ENCODE measurements at regions of chr3 and their contacts with region 1.

Region 1: GRCh38 chr3:98140531-98140930 is 6.7 kb upstream of the OR5H14 start:
- DNase-seq: no peak
- ATAC-seq: no peak
- H3K4me3 ChIP-seq: no peak overlapping the region
- H3K4me3 Mint-ChIP-seq: no peak overlapping the region
- H3K27ac ChIP-seq: no peak overlapping the region
- H3K27ac Mint-ChIP-seq: no peak overlapping the region
- H3K4me1 ChIP-seq: no peaks in the 10 kb centered on the region
- H3K4me1 Mint-ChIP-seq: no peaks in the 10 kb centered on the region
- H3K27me3 ChIP-seq: no peaks in the 10 kb centered on the region
- H3K27me3 Mint-ChIP-seq: peaks cover 4% of the 10 kb centered on the region
- CTCF ChIP-seq: no peak

Region 2: GRCh38 chr3:98151241-98151640 is 10.7 kb after region 1 on chr3:
- CTCF ChIA-PET with region 1: no interaction called
- POLR2A ChIA-PET with region 1: no interaction called
- intact Hi-C with region 1: no loop called
- DNase-seq: no peak
- ATAC-seq: no peak
- H3K4me3 ChIP-seq: no peak overlapping the region
- H3K4me3 Mint-ChIP-seq: no peak overlapping the region
- H3K27ac ChIP-seq: no peak overlapping the region
- H3K27ac Mint-ChIP-seq: no peak overlapping the region
- H3K4me1 ChIP-seq: no peaks in the 10 kb centered on the region
- H3K4me1 Mint-ChIP-seq: no peaks in the 10 kb centered on the region
- H3K27me3 ChIP-seq: no peaks in the 10 kb centered on the region
- H3K27me3 Mint-ChIP-seq: peaks cover 3% of the 10 kb centered on the region
- CTCF ChIP-seq: no peak

Region 3: GRCh38 chr3:98182196-98182595 is 41.7 kb after region 1 on chr3:
- CTCF ChIA-PET with region 1: no interaction called
- POLR2A ChIA-PET with region 1: no interaction called
- intact Hi-C with region 1: loop called (anchors 1 to 2 kb)
- DNase-seq: no peak
- ATAC-seq: no peak
- H3K4me3 ChIP-seq: no peak overlapping the region
- H3K4me3 Mint-ChIP-seq: no peak overlapping the region
- H3K27ac ChIP-seq: no peak overlapping the region
- H3K27ac Mint-ChIP-seq: no peak overlapping the region
- H3K4me1 ChIP-seq: no peaks in the 10 kb centered on the region
- H3K4me1 Mint-ChIP-seq: no peaks in the 10 kb centered on the region
- H3K27me3 ChIP-seq: no peaks in the 10 kb centered on the region
- H3K27me3 Mint-ChIP-seq: no peaks in the 10 kb centered on the region
- CTCF ChIP-seq: no peak

Region 4: DNA sequence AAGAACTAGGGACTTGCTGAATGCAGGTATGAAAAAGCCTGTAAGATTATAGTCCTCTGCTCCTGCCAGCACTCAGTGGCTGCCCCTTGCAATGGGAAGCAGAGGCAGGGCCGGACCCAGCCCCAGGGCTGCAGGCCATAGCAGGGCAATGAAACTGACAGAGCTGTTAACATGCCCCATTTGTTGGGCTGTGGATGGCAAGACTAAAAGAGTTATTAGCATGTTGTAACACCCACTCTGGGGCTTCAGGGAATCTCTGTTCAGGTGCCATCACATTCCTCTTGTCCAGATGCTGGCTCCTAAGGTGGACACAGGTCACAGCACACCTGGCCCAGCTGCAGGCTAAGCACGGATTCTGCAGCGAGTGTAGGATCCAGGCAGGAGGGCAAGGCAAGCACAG is 134.4 kb after region 1 on chr3:
- CTCF ChIA-PET with region 1: no interaction called
- POLR2A ChIA-PET with region 1: no interaction called
- intact Hi-C with region 1: no loop called
- DNase-seq: no peak
- ATAC-seq: no peak
- H3K4me3 ChIP-seq: no peak overlapping the region
- H3K4me3 Mint-ChIP-seq: no peak overlapping the region
- H3K27ac ChIP-seq: no peak overlapping the region
- H3K27ac Mint-ChIP-seq: no peak overlapping the region
- H3K4me1 ChIP-seq: no peaks in the 10 kb centered on the region
- H3K4me1 Mint-ChIP-seq: no peaks in the 10 kb centered on the region
- H3K27me3 ChIP-seq: no peaks in the 10 kb centered on the region
- H3K27me3 Mint-ChIP-seq: peaks cover 2% of the 10 kb centered on the region
- CTCF ChIP-seq: no peak